ENCODE measurements at regions of chr16 and their contacts with region 1.

Region 1: DNA sequence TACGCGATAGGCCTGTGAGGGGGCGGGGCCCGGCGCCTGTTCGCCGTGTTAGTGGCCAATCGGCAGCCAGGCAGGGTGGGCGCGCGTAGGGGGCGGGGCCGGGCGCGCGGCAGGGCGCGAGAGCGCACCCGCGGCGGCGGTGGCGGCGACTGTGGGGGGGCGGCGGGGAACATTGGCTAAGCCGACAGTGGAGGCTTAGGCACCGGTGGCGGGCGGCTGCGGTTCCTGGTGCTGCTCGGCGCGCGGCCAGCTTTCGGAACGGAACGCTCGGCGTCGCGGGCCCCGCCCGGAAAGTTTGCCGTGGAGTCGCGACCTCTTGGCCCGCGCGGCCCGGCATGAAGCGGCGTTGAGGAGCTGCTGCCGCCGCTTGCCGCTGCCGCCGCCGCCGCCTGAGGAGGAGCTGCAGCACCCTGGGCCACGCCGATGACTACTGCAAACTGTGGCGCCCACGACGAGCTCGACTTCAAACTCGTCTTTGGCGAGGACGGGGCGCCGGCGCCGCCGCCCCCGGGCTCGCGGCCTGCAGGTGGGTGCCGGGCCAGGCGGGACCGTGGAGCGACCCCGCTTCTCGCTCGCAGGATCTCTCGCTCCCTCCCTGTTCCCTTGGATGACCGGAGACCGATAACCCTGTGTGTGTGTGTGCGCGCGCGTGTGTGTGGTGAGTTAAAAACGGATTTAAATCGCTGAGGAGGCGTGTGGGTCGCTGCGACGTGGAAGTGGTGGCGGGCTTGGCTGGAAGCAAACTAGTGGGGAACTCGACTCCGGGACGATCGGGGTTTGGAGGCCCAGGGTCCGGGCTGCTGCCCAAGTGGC is at the start of gene NFATC3:
- DNase-seq: peak; percentile 95 to 100 (median 98)
- ATAC-seq: peak; percentile 69 to 79
- H3K4me3 Mint-ChIP-seq: peak within 1 kb of the TSS; percentile 86 to 98 (median 92)
- H3K27ac Mint-ChIP-seq: peak within 1 kb of the TSS; percentile 81 to 97 (median 96)
- H3K4me1 Mint-ChIP-seq: peaks cover 40 to 71% (median 66%) of the 10 kb centered on the region in 4 donors
- H3K27me3 Mint-ChIP-seq: no peaks in the 10 kb centered on the region
- polyA plus RNA-seq, gene NFATC3: 85.2 to 102 (median 86.6) TPM

Region 2: DNA sequence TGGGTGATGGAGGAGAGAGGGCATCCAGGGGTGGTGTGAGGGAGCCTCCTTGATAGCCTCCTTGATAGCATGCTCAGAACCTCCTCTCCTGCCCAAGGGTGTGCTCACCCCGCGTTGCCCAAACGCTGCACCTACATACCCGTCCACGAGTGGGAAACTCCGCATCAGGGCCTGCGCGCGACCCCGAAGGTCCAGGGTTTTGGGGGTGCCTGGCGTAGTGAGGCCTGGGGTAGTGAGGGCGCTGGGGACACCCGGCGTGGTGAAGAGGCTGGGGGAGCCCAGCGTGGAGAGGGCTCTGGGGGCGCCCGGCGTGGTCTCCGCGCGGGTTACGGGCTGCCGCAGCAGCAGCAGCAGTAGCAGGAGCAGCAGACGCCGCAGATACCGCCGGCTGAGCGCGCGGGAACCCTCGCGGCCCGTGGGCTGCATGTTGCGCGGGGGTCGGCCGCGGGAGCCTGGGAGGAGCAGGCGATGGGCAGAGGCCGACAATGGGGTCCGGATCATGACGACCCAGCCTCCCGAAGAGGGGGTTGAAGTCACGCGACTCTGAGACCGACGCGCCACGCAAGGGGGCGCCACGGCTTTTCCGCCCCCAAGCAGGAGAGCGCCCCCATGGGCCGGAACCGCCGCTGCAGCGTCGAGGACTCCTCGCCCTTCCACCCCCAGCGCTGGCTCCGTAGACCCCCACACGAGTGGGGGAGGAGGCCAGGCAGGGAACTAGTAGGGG is 105.3 kb before region 1 on chr16 and contains the start of gene DPEP3:
- POLR2A ChIA-PET with region 1: no interaction called
- DNase-seq: peak in 2 of 10 donors; percentile 14 to 23
- ATAC-seq: peak in 1 of 2 donors; percentile 28
- H3K4me3 Mint-ChIP-seq: no peak within 1 kb of the TSS
- H3K27ac Mint-ChIP-seq: peak within 1 kb of the TSS in 1 of 10 donors; percentile 6
- H3K4me1 Mint-ChIP-seq: peaks cover 14 to 24% (median 20%) of the 10 kb centered on the region in 4 donors
- H3K27me3 Mint-ChIP-seq: no peaks in the 10 kb centered on the region
- polyA plus RNA-seq, gene DPEP3: 0.50 to 1.5 (median 1.1) TPM

Region 3: DNA sequence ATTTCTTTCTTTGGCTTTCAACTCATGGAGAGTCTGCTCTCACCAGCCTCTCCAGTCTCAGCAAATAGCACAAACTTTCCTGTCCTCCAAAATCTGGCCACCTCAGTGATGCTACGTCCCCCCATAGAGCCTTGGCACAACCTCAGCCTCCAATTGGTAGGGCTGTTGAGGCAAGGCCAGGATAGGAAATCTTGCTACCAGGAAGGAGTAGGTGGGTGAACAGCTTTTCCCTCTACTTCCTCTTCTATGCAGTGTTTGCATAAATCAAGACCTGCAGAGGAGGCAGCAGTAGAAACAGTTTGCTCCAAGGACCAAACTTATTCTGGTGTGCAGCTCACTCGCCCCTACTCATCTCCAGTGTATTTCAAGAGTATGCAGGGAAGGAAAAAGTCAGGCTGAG is 85.5 kb before region 1 on chr16:
- POLR2A ChIA-PET with region 1: interaction called, 45 read pairs
- DNase-seq: peak in 1 of 10 donors; percentile 30
- ATAC-seq: peak; percentile 14
- H3K4me3 Mint-ChIP-seq: peak overlapping the region; percentile 78 to 97 (median 88)
- H3K27ac Mint-ChIP-seq: peak overlapping the region; percentile 88 to 100 (median 96)
- H3K4me1 Mint-ChIP-seq: peaks cover 20 to 78% (median 58%) of the 10 kb centered on the region in 4 donors
- H3K27me3 Mint-ChIP-seq: no peaks in the 10 kb centered on the region

Region 4: GRCh38 chr16:68022704-68023522 is 62.6 kb before region 1 on chr16 and contains the starts of genes DDX28 and DUS2:
- POLR2A ChIA-PET with region 1: interaction called, 22 read pairs
- DNase-seq: peak; percentile 85 to 97 (median 94)
- ATAC-seq: peak; percentile 91 to 92
- H3K4me3 Mint-ChIP-seq: peak within 1 kb of the TSS; percentile 89 to 100 (median 98)
- H3K27ac Mint-ChIP-seq: peak within 1 kb of the TSS; percentile 94 to 99 (median 98)
- H3K4me1 Mint-ChIP-seq: peaks cover 14 to 46% (median 27%) of the 10 kb centered on the region in 4 donors
- H3K27me3 Mint-ChIP-seq: peaks cover 0 to 2% (median 0%) of the 10 kb centered on the region in 5 donors
- polyA plus RNA-seq, gene DDX28: 49.7 to 60.6 (median 53.9) TPM
- polyA plus RNA-seq, gene DUS2: 6.4 to 13.1 (median 10.5) TPM

Region 5: GRCh38 chr16:68064791-68065365 is 20.6 kb before region 1 on chr16:
- POLR2A ChIA-PET with region 1: interaction called, 406 read pairs
- DNase-seq: peak; percentile 43 to 81 (median 66)
- ATAC-seq: peak; percentile 82 to 92
- H3K4me3 Mint-ChIP-seq: peak overlapping the region in 6 of 10 donors; percentile 15 to 54 (median 26)
- H3K27ac Mint-ChIP-seq: peak overlapping the region; percentile 48 to 93 (median 85)
- H3K4me1 Mint-ChIP-seq: peaks cover 32 to 84% (median 81%) of the 10 kb centered on the region in 4 donors
- H3K27me3 Mint-ChIP-seq: no peaks in the 10 kb centered on the region

Region 6: DNA sequence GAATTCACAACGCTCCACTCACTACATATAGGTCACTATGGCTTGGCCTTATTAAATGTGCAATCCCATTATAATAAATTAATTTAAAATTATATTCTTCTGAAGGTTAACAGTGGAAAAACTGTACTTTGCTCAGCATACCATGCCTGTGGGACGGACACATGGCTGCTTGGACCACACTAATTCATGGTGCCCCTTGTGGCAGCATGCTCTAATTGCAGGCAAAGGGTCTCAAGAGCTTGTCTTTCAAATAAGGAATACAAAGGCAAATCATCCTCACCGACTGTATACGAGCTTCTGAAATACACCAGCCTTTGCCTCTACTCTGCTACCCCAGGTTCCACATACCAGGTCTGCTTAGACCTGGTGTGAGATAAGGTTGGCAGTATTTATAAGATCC is 351.1 kb after region 1 on chr16:
- POLR2A ChIA-PET with region 1: no interaction called
- DNase-seq: no peak
- ATAC-seq: no peak
- H3K4me3 Mint-ChIP-seq: no peak overlapping the region
- H3K27ac Mint-ChIP-seq: no peak overlapping the region
- H3K4me1 Mint-ChIP-seq: peaks cover 7 to 14% (median 9%) of the 10 kb centered on the region in 4 donors
- H3K27me3 Mint-ChIP-seq: peaks cover 0 to 13% (median 2%) of the 10 kb centered on the region in 5 donors